GM10248 (cell line): ENCODE measurements at regions of chr18 and their contacts with region 1.

Region 1: DNA sequence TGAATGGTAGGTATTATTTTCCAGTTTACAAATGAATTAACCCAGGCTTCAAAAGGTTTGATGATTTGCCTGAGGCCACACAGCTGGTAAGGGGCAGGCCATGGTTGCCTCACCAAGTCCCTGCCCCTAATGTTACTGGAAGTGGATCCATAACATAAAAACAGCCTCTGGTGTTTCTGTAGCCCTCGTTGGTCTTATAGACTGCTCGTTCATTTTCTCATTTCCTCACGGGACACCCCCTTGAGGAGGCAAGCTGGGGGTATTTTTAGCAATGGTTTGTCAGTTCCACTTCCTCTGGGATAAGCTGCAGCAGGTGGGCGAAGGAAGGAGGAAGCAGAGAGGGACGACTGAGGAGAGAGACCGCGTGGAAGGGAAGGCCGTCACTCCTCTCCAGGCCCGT is 32.9 kb upstream of the NDUFV2 start:
- DNase-seq: no peak
- CTCF ChIP-seq: no peak

Region 2: GRCh38 chr18:9058406-9058805 is 11.2 kb before region 1 on chr18:
- CTCF ChIA-PET with region 1: interaction called, 10 read pairs
- POLR2A ChIA-PET with region 1: no interaction called
- DNase-seq: no peak
- CTCF ChIP-seq: no peak

Region 3: GRCh38 chr18:9082711-9083510 is 13.3 kb after region 1 on chr18:
- CTCF ChIA-PET with region 1: interaction called, 16 read pairs
- POLR2A ChIA-PET with region 1: no interaction called
- DNase-seq: peak; percentile 54
- CTCF ChIP-seq: no peak

Region 4: GRCh38 chr18:9102508-9103375 is 33.1 kb after region 1 on chr18 and contains the start of gene NDUFV2:
- CTCF ChIA-PET with region 1: interaction called, 12 read pairs
- POLR2A ChIA-PET with region 1: no interaction called
- DNase-seq: peak; percentile 99
- CTCF ChIP-seq: no peak

Region 5: DNA sequence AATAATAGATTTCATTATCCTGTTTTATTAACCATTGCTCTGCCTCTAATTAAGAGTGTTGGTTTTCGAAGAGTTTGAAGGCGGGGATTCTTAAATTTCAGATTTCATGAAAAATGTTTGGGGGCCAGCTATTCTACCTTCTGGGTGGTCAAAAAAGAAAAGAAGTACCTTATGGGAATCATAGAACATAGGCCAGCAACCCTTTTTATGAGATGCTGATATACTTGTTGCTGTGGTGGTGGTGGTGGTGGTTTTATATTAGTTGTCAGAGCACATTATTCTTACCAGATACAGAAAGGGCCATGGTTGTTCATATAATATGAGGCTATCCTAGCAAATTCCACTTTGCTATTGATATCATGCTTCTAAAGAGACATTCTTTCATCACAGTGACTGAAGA is 71.4 kb after region 1 on chr18:
- CTCF ChIA-PET with region 1: interaction called, 10 read pairs
- POLR2A ChIA-PET with region 1: no interaction called
- DNase-seq: no peak
- CTCF ChIP-seq: no peak

Region 6: GRCh38 chr18:9147440-9148202 is 78.0 kb after region 1 on chr18:
- CTCF ChIA-PET with region 1: interaction called, 10 read pairs
- POLR2A ChIA-PET with region 1: no interaction called
- DNase-seq: peak; percentile 33
- CTCF ChIP-seq: peak; percentile 79

Region 7: DNA sequence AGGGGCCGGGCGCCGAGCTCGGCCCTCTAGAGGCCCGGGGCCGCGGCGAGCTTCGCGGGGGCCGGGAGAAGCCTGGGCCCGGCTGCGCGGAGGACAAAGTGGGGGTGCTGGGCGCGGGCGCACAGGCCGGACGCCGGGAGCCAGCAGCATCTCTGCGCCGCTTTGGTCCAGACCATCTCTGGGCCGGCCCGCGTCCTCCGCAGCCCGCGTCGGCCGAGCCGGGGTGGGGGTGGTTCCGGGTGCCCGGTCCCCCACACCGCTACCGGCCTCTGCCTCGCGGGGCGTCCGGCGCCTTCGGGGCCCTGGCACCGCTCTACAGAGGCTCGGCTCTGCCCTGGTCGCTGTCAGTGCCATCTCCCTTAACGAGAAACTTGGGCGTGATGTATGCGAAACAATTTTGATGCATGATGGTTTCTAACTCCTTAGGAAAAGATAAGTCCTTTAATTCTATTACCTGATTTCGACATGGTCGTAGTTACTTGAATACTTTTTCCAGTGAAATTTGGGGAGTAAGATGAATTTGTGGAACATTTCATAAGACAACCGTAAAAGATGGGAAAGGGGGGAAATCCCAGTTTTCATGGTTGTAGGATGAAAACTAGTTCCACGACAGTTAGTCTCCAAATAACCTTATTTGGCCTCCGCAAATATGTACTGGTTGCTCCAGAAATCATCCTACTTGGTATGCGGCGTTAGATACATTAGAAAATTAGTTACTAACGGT is 265.5 kb after region 1 on chr18:
- CTCF ChIA-PET with region 1: no interaction called
- POLR2A ChIA-PET with region 1: no interaction called
- DNase-seq: peak; percentile 46
- CTCF ChIP-seq: no peak

Region 8: GRCh38 chr18:9516437-9517064 is 446.9 kb after region 1 on chr18:
- CTCF ChIA-PET with region 1: interaction called, 10 read pairs
- POLR2A ChIA-PET with region 1: no interaction called
- DNase-seq: peak; percentile 58
- CTCF ChIP-seq: peak; percentile 84